WTC11 (cell line): ENCODE measurements at regions of chr4 and their contacts with region 1.

Region 1: GRCh38 chr4:75995727-75996126 is 5.0 kb upstream of the SDAD1 start:
- DNase-seq: no peak
- ATAC-seq: no peak; the same call in 1 of the 2 replicates
- H3K4me3 Mint-ChIP-seq: no peak overlapping the region
- H3K27ac Mint-ChIP-seq: no peak overlapping the region
- H3K4me1 Mint-ChIP-seq: no peaks in the 10 kb centered on the region
- H3K27me3 Mint-ChIP-seq: peaks cover 9% of the 10 kb centered on the region
- CTCF ChIP-seq: peak; percentile 50

Region 2: DNA sequence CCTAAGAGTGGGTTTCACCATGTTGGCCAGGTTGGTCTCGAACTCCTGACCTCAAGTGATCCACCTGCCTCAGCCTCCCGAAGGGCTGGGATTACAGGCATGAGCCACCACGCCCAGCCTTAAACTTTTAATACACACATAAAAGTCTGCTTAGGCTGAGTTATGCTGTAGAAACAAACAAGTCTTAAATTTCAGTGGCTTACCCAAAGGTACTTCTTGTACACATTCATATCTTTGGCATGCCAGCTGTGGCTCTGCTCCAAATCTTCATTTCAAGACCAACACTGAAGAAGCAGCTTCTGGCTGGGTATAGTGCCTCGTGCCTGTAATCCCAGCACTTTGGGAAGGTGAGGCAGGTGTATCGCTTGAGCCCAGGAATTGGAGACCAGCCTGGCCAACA is 173.8 kb before region 1 on chr4:
- CTCF ChIA-PET with region 1: no interaction called
- POLR2A ChIA-PET with region 1: no interaction called
- DNase-seq: no peak
- ATAC-seq: no peak
- H3K4me3 Mint-ChIP-seq: no peak overlapping the region
- H3K27ac Mint-ChIP-seq: no peak overlapping the region
- H3K4me1 Mint-ChIP-seq: no peaks in the 10 kb centered on the region
- H3K27me3 Mint-ChIP-seq: no peaks in the 10 kb centered on the region
- CTCF ChIP-seq: no peak

Region 3: DNA sequence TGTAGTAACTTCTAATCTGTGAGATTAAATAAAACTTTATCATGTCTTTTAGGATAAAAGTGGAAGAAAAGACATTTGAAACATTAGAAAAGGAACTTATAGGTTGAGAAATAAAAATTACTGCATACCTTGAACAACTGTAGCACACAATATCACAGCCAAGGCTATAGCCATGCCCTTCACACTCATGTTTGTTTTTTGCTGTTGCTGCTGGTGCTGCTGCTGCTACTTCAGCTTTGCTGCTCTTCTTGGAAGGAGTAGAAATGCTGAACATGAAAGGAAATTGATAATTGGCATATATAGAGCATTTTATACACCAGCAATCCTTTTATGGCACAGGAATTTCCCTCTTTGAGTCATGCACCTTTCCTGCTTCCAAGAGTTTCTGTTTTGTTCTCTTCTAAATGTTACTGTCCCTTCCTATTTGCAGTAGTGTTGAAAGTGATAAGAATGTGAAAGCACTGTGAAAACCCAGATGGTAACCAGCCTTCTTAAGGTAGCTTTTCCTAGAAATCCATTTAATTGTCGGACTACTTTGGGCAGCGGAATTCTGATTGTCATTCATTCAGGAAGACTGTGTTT is 40.2 kb after region 1 on chr4 and contains the start of gene CXCL11:
- CTCF ChIA-PET with region 1: interaction called, 13 read pairs
- POLR2A ChIA-PET with region 1: interaction called, 3 read pairs
- DNase-seq: no peak
- ATAC-seq: no peak
- H3K4me3 Mint-ChIP-seq: no peak within 1 kb of the TSS
- H3K27ac Mint-ChIP-seq: no peak within 1 kb of the TSS
- H3K4me1 Mint-ChIP-seq: no peaks in the 10 kb centered on the region
- H3K27me3 Mint-ChIP-seq: no peaks in the 10 kb centered on the region
- CTCF ChIP-seq: no peak
- total RNA-seq, gene CXCL11: 0.20 TPM in 1 of 3 replicates, not detected in the others

Region 4: DNA sequence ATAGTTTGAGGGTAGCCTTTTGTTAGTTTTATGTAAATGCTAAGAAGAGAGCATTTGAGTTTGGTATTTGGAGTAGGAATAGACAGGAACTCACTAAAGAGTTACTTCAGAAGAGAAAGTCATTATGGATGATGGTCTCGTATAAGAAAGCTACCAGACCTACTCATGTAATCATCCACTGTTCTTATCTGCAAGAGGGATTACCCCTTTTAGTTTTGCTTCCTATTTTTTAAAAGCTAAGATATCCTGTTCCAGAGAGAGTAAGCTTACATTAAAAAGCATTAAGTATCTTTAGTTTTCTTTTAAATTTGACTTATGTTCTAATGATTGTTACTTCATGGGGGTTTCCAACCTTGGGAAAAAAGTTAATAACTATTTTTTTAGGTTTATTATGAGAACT is 66.3 kb after region 1 on chr4:
- CTCF ChIA-PET with region 1: interaction called, 17 read pairs
- POLR2A ChIA-PET with region 1: no interaction called
- DNase-seq: no peak
- ATAC-seq: no peak
- H3K4me3 Mint-ChIP-seq: no peak overlapping the region
- H3K27ac Mint-ChIP-seq: no peak overlapping the region
- H3K4me1 Mint-ChIP-seq: peaks cover 4% of the 10 kb centered on the region
- H3K27me3 Mint-ChIP-seq: no peaks in the 10 kb centered on the region
- CTCF ChIP-seq: no peak

Region 5: DNA sequence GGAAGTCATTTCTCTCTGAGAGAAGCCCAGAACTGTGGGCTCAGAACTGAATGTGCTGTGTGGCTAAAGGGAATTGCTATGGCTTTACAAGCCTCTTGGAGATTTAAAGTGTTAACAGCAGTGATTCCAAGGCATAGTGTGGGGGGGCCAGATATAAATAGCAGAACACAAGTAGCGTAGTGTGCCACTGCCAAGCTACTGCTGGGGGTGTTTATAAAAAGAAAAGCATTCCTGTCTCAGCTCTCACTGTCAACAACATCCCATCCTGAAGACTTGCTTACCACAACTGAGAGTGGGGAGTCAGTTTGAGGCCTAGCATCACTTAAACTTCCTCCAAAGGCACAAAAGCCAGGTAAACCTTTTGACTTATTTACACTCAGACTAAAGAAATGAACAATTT is 78.7 kb after region 1 on chr4 and contains the start of gene ART3:
- CTCF ChIA-PET with region 1: interaction called, 17 read pairs
- POLR2A ChIA-PET with region 1: no interaction called
- DNase-seq: no peak
- ATAC-seq: no peak
- H3K4me3 Mint-ChIP-seq: no peak within 1 kb of the TSS
- H3K27ac Mint-ChIP-seq: peak within 1 kb of the TSS; percentile 62; the same call in 1 of the 2 replicates
- H3K4me1 Mint-ChIP-seq: peaks cover 12% of the 10 kb centered on the region
- H3K27me3 Mint-ChIP-seq: no peaks in the 10 kb centered on the region
- CTCF ChIP-seq: no peak
- total RNA-seq, gene ART3: 0.27 to 0.59 TPM in 2 of 3 replicates, not detected in the other

Region 6: DNA sequence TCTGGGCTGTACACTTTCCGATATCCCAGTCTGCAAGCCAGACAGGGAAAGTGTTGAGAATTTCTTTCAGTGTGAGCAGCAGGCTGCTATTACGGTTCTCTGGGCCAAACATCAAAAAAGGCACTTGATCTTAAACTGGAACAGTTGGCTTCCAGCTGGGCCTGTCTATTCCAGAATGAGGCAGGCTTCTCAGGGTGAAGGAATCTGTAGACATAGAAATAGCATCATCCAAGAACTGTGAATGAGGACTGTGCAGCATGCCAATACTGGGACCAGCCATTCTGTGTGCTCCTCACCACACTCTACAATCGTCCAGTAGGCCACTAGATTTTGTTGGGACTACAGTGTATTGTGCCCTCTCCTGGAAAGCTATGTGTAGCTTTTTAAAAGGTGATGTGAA is 109.9 kb after region 1 on chr4:
- CTCF ChIA-PET with region 1: interaction called, 10 read pairs
- POLR2A ChIA-PET with region 1: no interaction called
- DNase-seq: no peak
- ATAC-seq: no peak
- H3K4me3 Mint-ChIP-seq: no peak overlapping the region
- H3K27ac Mint-ChIP-seq: no peak overlapping the region
- H3K4me1 Mint-ChIP-seq: no peaks in the 10 kb centered on the region
- H3K27me3 Mint-ChIP-seq: peaks cover 32% of the 10 kb centered on the region
- CTCF ChIP-seq: no peak